Pancreas (tissue), 10 donors: ENCODE measurements at regions of chr3 and their contacts with region 1.

Region 1: DNA sequence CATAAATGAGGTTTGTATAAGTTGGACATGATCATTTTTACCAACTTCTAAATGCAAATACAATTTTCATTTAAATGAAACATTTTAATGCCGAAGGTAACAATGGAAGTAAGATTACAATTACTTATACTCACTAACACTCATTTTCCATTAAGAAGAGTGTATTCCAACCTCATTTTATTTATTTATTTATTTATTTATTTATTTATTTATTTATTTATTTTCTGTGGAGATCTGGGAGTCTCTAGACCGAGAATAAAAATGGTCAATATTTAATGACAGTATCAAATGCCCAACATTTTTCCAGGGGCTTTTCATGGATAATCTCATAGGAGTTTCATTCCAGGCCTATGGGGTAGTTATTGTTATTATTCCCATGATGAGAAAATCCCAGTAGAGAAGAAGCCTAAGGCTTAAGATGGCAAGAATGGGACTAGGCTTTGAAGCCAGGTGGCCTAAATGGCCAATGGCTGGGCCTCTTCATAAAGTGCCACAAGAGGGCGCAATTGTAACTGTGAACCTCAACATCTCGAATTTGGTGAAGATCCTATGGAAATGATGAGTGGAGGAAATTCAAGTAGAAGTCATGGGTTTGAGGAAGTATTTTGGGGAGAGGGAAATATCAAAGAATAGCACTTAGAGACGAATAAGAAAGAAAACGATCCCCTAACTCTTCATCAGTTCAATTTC is 21.3 kb downstream of the VGLL3 start:
- DNase-seq: peak in 1 of 6 donors; percentile 31
- ATAC-seq: peak in 3 of 4 donors; percentile 24 to 61 (median 25)
- H3K4me3 ChIP-seq: no peak overlapping the region
- H3K27ac ChIP-seq: no peak overlapping the region
- H3K4me1 ChIP-seq: peaks cover 0 to 14% (median 0%) of the 10 kb centered on the region in 3 donors
- H3K27me3 ChIP-seq: no peaks in the 10 kb centered on the region
- CTCF ChIP-seq: peak in 3 of 4 donors; percentile 36 to 53 (median 48)

Region 2: GRCh38 chr3:86837871-86838270 is 131.8 kb before region 1 on chr3:
- intact Hi-C with region 1: no loop called
- DNase-seq: no peak
- ATAC-seq: no peak
- H3K4me3 ChIP-seq: no peak overlapping the region
- H3K27ac ChIP-seq: no peak overlapping the region
- H3K4me1 ChIP-seq: no peaks in the 10 kb centered on the region
- H3K27me3 ChIP-seq: no peaks in the 10 kb centered on the region
- CTCF ChIP-seq: no peak

Region 3: DNA sequence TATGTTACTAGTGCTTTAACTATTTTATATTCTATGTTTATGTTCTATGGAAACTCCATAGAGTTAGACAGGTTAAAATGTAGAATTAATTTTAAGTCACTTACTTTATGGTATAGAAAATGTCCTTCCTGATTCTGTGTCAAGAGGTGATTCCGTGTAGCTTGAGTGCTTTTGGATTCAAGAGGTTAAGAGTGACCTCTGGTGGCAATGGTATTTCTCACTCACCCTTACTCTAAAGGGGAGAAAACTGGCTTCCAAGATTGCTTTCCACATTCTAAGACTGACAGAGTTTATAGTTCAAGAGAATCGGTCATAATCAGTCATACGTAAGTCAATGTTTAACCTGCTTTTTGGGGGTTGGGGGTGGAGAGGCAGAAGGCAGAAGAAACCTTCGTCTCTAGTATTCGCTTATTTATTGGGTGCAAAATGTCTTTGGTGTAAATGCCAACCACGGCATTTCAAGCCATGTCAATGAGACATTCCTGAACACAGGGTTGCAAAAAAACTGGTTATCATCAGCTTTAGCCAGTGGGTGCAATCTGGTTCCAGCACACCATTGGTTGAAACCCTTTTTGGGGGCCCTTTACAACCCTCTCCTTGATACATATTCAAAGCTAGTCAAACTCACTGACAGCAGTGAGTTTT is 113.3 kb after region 1 on chr3:
- intact Hi-C with region 1: loop called in 1 of 3 experiments (anchors 10 kb)
- DNase-seq: peak in 2 of 6 donors; percentile 9 to 19
- ATAC-seq: peak; percentile 82 to 95 (median 92)
- H3K4me3 ChIP-seq: no peak overlapping the region
- H3K27ac ChIP-seq: no peak overlapping the region
- H3K4me1 ChIP-seq: no peaks in the 10 kb centered on the region
- H3K27me3 ChIP-seq: no peaks in the 10 kb centered on the region
- CTCF ChIP-seq: peak in 3 of 4 donors; percentile 27 to 44 (median 37)